IMR-90 (cell line): ENCODE measurements at regions of chr18 and their contacts with region 1.

Region 1: GRCh38 chr18:62522504-62523254 is at the start of gene ZCCHC2:
- DNase-seq: peak; percentile 96
- ATAC-seq: peak; percentile 88
- H3K4me3 ChIP-seq: peak within 1 kb of the TSS; percentile 83
- H3K27ac ChIP-seq: peak within 1 kb of the TSS; percentile 71
- H3K4me1 ChIP-seq: peaks cover 3% of the 10 kb centered on the region; the same call in 1 of the 2 replicates
- H3K27me3 ChIP-seq: peaks cover 2% of the 10 kb centered on the region; the same call in 1 of the 2 replicates
- CTCF ChIP-seq: no peak
- POLR2A ChIP-seq: peak; percentile 65; the same call in 1 of the 2 replicates
- RAD21 ChIP-seq: no peak
- total RNA-seq, gene ZCCHC2: 2.2 and 3.6 TPM in 2 replicates

Region 2: DNA sequence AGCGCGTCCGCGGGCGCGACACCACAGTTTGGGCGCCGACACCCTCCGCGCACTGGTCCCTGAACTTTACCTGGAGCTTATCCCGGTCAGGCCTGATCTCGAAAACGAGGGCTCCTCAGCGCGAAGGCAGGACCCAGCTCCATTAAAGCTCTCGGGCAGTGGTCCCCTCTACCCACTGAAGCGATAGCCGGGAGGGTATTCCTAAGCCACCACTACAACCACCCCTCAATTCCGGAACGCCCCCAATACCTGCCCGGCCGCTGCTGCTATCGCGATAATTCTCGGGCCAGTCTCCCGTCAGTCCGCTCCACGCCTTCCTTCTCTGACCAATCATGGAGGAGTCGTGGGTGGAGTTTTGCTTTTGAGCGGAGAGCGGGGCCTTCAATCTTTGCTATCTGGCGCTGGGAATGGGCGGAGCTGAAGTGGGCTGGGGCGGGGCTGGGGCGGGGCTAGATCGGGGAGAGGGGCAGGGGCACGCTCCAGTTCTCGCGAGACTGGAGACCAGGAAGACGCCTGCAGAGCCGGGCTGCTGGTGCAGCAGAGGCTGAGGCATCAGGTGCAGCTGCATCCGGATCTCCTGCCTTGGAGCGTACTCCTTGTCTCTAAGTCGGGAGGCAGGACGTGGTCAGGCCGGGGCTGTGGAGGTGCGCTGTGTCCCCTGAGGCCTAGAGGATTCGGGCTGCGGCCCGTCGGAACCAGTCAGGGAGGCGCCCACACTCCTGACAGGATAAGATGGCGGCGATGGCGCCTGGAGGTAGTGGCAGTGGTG is 335.7 kb before region 1 on chr18 and contains the starts of genes PIGN and RELCH:
- CTCF ChIA-PET with region 1: no interaction called
- POLR2A ChIA-PET with region 1: no interaction called
- dilution Hi-C with region 1: no loop called
- in situ Hi-C with region 1: no loop called
- intact Hi-C with region 1: loop called (anchors 10 kb)
- DNase-seq: peak; percentile 98
- ATAC-seq: peak; percentile 95
- H3K4me3 ChIP-seq: peak within 1 kb of the TSS; percentile 96
- H3K27ac ChIP-seq: peak within 1 kb of the TSS; percentile 87
- H3K4me1 ChIP-seq: peaks cover 8% of the 10 kb centered on the region; the same call in 1 of the 2 replicates
- H3K27me3 ChIP-seq: no peaks in the 10 kb centered on the region
- CTCF ChIP-seq: no peak
- POLR2A ChIP-seq: peak; percentile 70
- RAD21 ChIP-seq: no peak
- total RNA-seq, gene PIGN: 17.9 and 42.2 TPM in 2 replicates
- total RNA-seq, gene RELCH: 45.5 and 52.5 TPM in 2 replicates

Region 3: DNA sequence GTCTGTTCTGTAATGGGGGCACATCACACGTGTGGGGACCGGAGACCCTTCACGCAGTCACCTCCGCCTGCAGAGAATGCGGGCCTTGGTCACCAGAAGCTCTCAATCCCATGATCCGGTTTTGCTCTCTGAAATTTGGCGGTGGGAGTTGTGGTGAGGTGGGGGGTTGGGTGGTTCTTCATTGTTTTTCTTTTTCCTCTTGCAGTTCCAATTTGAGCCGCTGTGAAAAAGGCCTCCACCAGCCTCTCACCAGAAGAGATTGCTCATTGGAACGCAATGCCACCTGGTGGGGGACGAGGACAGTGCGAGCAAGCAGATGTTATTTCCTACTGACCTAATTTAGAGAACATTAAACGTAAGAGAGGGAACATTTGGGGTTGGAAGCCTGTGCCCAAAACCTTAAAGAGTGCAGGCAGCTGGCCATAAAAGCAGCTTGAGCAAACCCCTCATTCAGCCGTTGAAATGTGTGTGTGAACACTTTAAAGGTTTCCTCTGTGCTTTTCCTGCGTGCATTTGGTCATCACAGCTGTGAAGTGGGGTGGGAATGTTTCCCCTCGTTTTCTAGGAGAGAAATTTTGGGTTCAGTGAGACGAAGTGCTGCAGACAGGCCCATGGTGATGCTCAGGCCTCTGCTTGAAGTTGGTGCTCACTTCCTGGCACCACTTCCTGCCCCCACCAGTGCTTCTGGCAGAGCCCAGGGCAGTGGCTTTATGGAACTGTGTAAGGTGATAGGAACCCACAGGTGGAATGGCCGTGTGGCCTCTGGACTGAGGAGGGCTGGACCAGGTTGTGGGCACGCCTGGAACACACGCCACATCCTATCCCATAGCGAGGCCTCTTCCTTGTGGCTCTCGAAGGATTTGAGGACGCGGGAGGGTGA is 61.8 kb after region 1 on chr18:
- CTCF ChIA-PET with region 1: interaction called, 4 read pairs
- POLR2A ChIA-PET with region 1: no interaction called
- dilution Hi-C with region 1: no loop called
- in situ Hi-C with region 1: no loop called
- intact Hi-C with region 1: loop called (anchors 1 kb)
- DNase-seq: peak; percentile 88
- ATAC-seq: peak; percentile 93
- H3K4me3 ChIP-seq: no peak overlapping the region
- H3K27ac ChIP-seq: no peak overlapping the region
- H3K4me1 ChIP-seq: peaks cover 1% of the 10 kb centered on the region; the same call in 1 of the 2 replicates
- H3K27me3 ChIP-seq: peaks cover 3% of the 10 kb centered on the region; the same call in 1 of the 2 replicates
- CTCF ChIP-seq: peak; percentile 99
- POLR2A ChIP-seq: no peak
- RAD21 ChIP-seq: peak; percentile 91

Region 4: GRCh38 chr18:62784966-62785413 is 262.3 kb after region 1 on chr18:
- CTCF ChIA-PET with region 1: no interaction called
- POLR2A ChIA-PET with region 1: no interaction called
- dilution Hi-C with region 1: no loop called
- in situ Hi-C with region 1: no loop called
- intact Hi-C with region 1: loop called (anchors 10 kb)
- DNase-seq: peak; percentile 84
- ATAC-seq: peak; percentile 77
- H3K4me3 ChIP-seq: no peak overlapping the region
- H3K27ac ChIP-seq: no peak overlapping the region
- H3K4me1 ChIP-seq: peaks cover 8% of the 10 kb centered on the region
- H3K27me3 ChIP-seq: no peaks in the 10 kb centered on the region
- CTCF ChIP-seq: no peak
- POLR2A ChIP-seq: no peak
- RAD21 ChIP-seq: no peak

Region 5: GRCh38 chr18:63320046-63320689 is 797.5 kb after region 1 on chr18:
- CTCF ChIA-PET with region 1: no interaction called
- POLR2A ChIA-PET with region 1: no interaction called
- dilution Hi-C with region 1: no loop called
- in situ Hi-C with region 1: no loop called
- intact Hi-C with region 1: loop called (anchors 10 kb)
- DNase-seq: peak; percentile 75
- ATAC-seq: peak; percentile 76
- H3K4me3 ChIP-seq: peak overlapping the region; percentile 63
- H3K27ac ChIP-seq: peak overlapping the region; percentile 30
- H3K4me1 ChIP-seq: peaks cover 10% of the 10 kb centered on the region
- H3K27me3 ChIP-seq: peaks cover 18% of the 10 kb centered on the region
- CTCF ChIP-seq: 0 out of 2 replicates have a peak, but pooled peaks have one; percentile 23
- POLR2A ChIP-seq: no peak
- RAD21 ChIP-seq: no peak